Endothelial cell of umbilical vein (primary cell): ENCODE measurements at regions of chr12 and their contacts with region 1.

Region 1: DNA sequence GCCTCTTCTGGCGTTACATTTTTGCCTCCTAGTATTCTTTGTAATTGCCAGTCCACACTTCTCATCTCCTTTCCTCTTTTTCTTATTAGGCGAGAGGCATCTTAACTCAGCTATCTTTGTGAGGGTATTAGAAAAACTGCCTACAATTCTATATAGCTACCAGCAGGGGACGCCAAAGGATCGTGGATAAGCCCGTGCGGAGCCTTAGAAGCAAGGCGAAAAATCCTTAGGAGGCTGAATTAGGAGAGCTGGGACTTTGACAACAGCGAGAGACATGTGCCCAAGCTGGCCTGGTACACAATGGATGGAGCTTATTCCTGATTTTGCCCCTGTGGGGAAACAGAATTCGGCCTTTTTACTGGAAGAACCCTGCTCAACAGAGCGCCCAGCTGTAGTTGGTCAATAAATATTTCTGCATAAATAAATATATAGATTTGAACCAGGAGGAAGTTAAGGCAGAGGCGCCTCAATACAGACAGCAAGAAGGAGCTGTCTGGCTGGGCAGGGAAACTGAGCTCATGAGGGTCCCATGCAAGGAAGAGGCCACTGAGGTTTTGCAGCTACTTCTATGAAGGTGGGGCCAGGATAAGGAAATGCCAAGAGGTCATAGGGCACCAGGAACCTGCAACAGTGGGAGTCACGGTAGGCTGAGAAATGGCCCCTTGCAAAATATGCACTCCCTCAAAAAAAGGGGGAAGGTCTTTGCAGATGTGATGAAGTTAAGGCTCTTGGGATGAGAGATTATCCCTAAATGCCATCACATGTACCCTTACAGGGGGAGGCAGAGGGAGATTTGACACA is 14.6 kb upstream of the RBM19 start:
- DNase-seq: peak; percentile 66
- H3K4me3 ChIP-seq: no peak overlapping the region
- H3K27ac ChIP-seq: no peak overlapping the region
- H3K4me1 ChIP-seq: no peaks in the 10 kb centered on the region
- H3K27me3 ChIP-seq: no peaks in the 10 kb centered on the region
- CTCF ChIP-seq: peak; percentile 83 to 86
- POLR2A ChIP-seq: no peak

Region 2: GRCh38 chr12:113965951-113966797 is 14.6 kb before region 1 on chr12 and contains the start of gene RBM19:
- CTCF ChIA-PET with region 1: interaction called, 37 read pairs
- POLR2A ChIA-PET with region 1: no interaction called
- dilution Hi-C with region 1: no loop called
- intact Hi-C with region 1: no loop called
- DNase-seq: peak; percentile 98
- H3K4me3 ChIP-seq: peak within 1 kb of the TSS; percentile 54 to 85 (median 84)
- H3K27ac ChIP-seq: peak within 1 kb of the TSS; percentile 32
- H3K4me1 ChIP-seq: peaks cover 12% of the 10 kb centered on the region
- H3K27me3 ChIP-seq: peaks cover 0 to 2% of the 10 kb centered on the region in 2 experiments
- CTCF ChIP-seq: peak; percentile 94 to 96
- POLR2A ChIP-seq: peak; percentile 82
- total RNA-seq, gene RBM19: 34.0 and 34.4 TPM in 2 replicates

Region 3: DNA sequence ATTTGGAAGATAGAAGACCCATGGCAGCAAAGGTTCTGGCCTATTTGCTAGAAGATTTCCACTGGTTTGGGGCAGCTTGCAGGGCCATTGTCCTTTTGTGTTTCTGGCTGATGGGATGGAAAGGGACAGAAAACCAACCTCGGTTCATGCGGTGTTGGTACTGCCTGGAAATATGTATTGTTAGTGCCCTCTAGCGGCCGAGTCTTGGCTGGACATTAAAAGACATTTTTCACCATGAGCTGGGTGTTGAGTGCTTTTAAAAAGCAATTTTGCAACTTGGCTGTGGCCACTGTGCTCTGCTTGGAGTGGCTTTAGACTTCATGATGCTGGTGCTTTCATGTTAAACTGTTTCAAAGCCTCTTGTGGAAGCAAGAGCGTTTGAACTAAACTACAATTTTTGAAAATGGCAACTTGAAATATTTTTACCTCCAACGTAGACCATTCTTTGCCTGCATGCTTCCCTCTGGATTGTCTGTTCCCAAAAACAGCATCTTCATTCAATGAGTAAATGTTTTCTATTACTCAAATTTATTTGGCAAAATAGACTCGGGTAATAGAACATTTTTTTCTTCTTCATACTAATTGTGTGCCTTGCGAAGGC is 527.9 kb after region 1 on chr12:
- CTCF ChIA-PET with region 1: interaction called, 162 read pairs
- POLR2A ChIA-PET with region 1: no interaction called
- dilution Hi-C with region 1: no loop called
- intact Hi-C with region 1: loop called (anchors 1 kb)
- DNase-seq: peak; percentile 56
- H3K4me3 ChIP-seq: no peak overlapping the region
- H3K27ac ChIP-seq: no peak overlapping the region
- H3K4me1 ChIP-seq: no peaks in the 10 kb centered on the region
- H3K27me3 ChIP-seq: no peaks in the 10 kb centered on the region
- CTCF ChIP-seq: peak; percentile 63 to 64
- POLR2A ChIP-seq: no peak

Region 4: GRCh38 chr12:114636723-114637483 is 656.2 kb after region 1 on chr12:
- CTCF ChIA-PET with region 1: interaction called, 26 read pairs
- POLR2A ChIA-PET with region 1: no interaction called
- dilution Hi-C with region 1: no loop called
- intact Hi-C with region 1: no loop called
- DNase-seq: no peak
- H3K4me3 ChIP-seq: no peak overlapping the region
- H3K27ac ChIP-seq: no peak overlapping the region
- H3K4me1 ChIP-seq: no peaks in the 10 kb centered on the region
- H3K27me3 ChIP-seq: no peaks in the 10 kb centered on the region
- CTCF ChIP-seq: no peak
- POLR2A ChIP-seq: no peak

Region 5: GRCh38 chr12:115752913-115753726 is 1772.4 kb after region 1 on chr12:
- CTCF ChIA-PET with region 1: interaction called, 4 read pairs
- POLR2A ChIA-PET with region 1: no interaction called
- dilution Hi-C with region 1: no loop called
- intact Hi-C with region 1: loop called (anchors 1 kb)
- DNase-seq: peak; percentile 18
- H3K4me3 ChIP-seq: no peak overlapping the region
- H3K27ac ChIP-seq: no peak overlapping the region
- H3K4me1 ChIP-seq: no peaks in the 10 kb centered on the region
- H3K27me3 ChIP-seq: no peaks in the 10 kb centered on the region
- CTCF ChIP-seq: peak; percentile 7 to 22
- POLR2A ChIP-seq: no peak

Region 6: DNA sequence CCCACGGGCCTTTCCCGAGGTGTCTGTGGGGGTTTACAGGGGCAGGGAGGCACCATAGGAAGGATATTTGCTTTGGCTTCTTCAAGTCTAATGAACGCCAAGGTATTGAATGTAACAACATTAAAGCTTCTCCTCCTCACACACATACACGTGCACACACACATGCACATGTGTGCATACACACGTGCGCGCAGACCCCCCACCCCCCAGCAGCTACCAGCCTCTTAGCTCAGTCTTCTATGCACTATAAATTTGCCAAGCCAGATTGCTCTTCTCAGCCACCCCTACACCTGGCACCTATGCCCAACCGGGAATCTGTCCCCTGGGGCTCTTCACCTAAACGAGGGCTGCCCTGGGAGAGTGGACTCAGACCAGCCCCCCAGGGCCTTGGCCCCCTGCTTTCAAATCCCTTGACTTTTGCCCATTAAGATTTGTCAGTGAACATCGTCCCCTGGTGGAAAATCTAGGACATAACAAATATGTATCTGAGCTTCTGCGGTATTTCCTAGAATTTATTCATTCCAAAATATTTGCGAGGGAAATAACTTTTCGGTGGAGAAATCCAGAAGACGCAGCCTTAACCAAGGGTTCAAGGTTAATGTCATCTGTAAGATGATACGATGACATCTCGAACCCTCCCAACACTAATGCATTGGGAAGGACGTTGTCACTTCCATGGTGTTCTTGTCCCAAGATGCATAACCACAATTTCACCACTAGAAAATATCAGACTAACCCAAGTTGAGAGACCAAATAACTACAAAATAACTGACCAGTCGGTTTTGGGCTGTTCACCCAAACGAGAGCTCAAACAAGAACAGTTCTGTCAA is 1966.3 kb after region 1 on chr12:
- CTCF ChIA-PET with region 1: interaction called, 34 read pairs
- POLR2A ChIA-PET with region 1: no interaction called
- dilution Hi-C with region 1: no loop called
- intact Hi-C with region 1: no loop called
- DNase-seq: no peak
- H3K4me3 ChIP-seq: no peak overlapping the region
- H3K27ac ChIP-seq: no peak overlapping the region
- H3K4me1 ChIP-seq: no peaks in the 10 kb centered on the region
- H3K27me3 ChIP-seq: no peaks in the 10 kb centered on the region
- CTCF ChIP-seq: peak; percentile 31 to 39
- POLR2A ChIP-seq: no peak